Activated naive CD4-positive, alpha-beta T cell treated with anti-CD3 and anti-CD28 coated beads, Interleukin-2, amount 10 ng/mL, durations not matched to agents 7 days and 5 days (primary cell): ENCODE measurements at regions of chr15 and their contacts with region 1.

Region 1: DNA sequence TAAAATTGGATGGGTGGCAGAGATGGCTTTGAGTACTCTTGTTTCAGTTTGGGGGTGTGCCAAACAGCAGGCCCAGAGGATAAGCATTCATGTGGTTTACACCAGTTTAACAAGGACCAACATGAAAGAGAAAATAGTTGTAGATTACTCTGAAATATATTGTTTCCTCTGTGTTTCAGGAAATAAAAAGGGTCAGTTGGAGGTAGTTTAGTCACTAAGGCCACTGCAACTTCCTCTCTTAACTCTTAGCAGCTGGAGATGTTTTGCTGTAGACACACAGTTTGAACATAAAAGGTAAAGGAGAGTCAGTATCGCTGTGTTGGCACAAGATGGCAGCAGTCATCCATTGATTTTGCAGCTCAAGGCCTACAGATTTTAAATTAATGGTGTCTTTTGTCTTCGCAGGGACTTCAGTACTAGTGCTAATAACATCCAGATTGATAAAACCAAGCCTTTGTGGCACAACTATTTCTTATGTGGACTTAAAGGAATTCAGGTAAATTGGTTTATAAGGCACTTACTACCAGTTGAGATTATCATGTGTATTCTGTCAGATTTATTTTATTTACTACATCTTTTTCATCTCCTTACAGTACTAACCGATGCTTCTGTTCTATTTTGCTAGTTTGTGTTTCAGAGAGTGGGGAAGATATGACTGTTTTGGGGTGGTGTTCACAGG is 65.5 kb downstream of the GALK2 start:
- DNase-seq: peak; percentile 69
- H3K4me3 Mint-ChIP-seq: no peak overlapping the region
- H3K27ac Mint-ChIP-seq: peak overlapping the region; percentile 28
- H3K4me1 Mint-ChIP-seq: peaks cover 16% of the 10 kb centered on the region
- H3K27me3 Mint-ChIP-seq: no peaks in the 10 kb centered on the region

Region 2: GRCh38 chr15:48963524-48964113 is 272.0 kb before region 1 on chr15 and contains the start of gene SHC4:
- CTCF ChIA-PET with region 1: no interaction called
- DNase-seq: no peak
- H3K4me3 Mint-ChIP-seq: peak within 1 kb of the TSS; percentile 62
- H3K27ac Mint-ChIP-seq: peak within 1 kb of the TSS; percentile 73
- H3K4me1 Mint-ChIP-seq: peaks cover 40% of the 10 kb centered on the region
- H3K27me3 Mint-ChIP-seq: peaks cover 58% of the 10 kb centered on the region

Region 3: DNA sequence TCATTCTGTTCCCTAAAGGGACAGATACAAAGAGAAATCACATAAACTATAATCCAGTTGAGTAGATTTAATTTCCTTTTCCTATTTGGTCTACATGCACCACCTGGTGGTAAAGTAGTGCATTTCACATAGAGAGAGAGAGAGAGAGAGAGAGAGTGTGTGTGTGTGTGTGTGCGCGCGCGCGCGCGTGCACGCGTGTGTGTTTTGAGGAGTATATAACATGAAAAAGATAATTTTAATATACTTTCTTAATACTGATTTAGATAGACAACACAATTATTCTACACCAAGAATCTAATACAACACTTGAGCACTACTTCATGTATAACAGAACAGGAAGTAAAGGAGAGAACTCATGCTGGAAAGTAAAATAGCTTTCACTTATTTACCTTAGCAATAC is 186.4 kb after region 1 on chr15:
- CTCF ChIA-PET with region 1: interaction called, 84 read pairs
- DNase-seq: peak; percentile 37
- H3K4me3 Mint-ChIP-seq: peak overlapping the region; percentile 3
- H3K27ac Mint-ChIP-seq: peak overlapping the region; percentile 19
- H3K4me1 Mint-ChIP-seq: no peaks in the 10 kb centered on the region
- H3K27me3 Mint-ChIP-seq: peaks cover 4% of the 10 kb centered on the region

Region 4: GRCh38 chr15:50003786-50004334 is 768.3 kb after region 1 on chr15:
- CTCF ChIA-PET with region 1: interaction called, 10 read pairs
- DNase-seq: peak; percentile 79
- H3K4me3 Mint-ChIP-seq: no peak overlapping the region
- H3K27ac Mint-ChIP-seq: peak overlapping the region; percentile 20
- H3K4me1 Mint-ChIP-seq: peaks cover 13% of the 10 kb centered on the region
- H3K27me3 Mint-ChIP-seq: peaks cover 10% of the 10 kb centered on the region